ENCODE measurements at regions of chr15 and their contacts with region 1.

Region 1: GRCh38 chr15:98850961-98851573 is 156.5 kb downstream of the PGPEP1L start:
- DNase-seq: peak; percentile 88
- H3K4me3 Mint-ChIP-seq: peak overlapping the region; percentile 88
- H3K27ac Mint-ChIP-seq: peak overlapping the region; percentile 27
- H3K4me1 Mint-ChIP-seq: peaks cover 56% of the 10 kb centered on the region
- H3K27me3 Mint-ChIP-seq: no peaks in the 10 kb centered on the region

Region 2: GRCh38 chr15:98658831-98659699 is 192.0 kb before region 1 on chr15:
- CTCF ChIA-PET with region 1: interaction called, 13 read pairs
- intact Hi-C with region 1: no loop called
- DNase-seq: peak; percentile 45
- H3K4me3 Mint-ChIP-seq: no peak overlapping the region
- H3K27ac Mint-ChIP-seq: no peak overlapping the region
- H3K4me1 Mint-ChIP-seq: peaks cover 52% of the 10 kb centered on the region
- H3K27me3 Mint-ChIP-seq: no peaks in the 10 kb centered on the region

Region 3: DNA sequence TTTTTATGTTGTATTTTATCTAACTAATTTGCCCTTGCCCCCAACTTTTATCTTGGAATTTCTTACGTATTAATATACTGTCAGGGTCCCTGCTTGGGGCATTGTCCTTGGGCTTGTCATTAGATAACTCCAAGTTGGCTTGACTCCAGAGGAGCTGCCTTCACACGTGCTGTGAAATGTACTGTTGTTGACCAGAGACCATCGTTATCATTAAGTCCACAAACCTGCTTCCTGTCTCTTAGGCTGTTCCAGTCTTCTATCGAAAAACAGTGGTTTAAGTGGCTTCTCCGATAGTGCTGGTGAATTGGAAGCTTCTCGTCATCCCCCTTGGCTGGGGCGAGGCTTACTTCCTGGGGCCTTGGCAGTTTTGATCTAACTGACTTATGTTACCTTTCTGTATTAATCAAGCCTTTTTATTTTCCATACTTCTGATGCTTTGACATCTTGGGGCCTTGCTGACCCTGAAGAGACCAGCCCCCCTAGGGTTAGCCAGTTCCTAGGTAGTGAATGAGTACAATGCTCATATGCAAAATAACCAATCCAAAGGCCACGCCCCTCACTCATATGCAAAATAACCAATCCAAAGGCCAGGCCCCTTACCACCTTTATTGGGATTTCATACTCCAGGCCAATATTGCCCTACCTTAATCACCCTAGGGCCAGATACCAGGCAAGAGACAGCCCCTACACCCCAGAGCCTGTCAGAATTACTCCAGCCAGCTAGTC is 38.2 kb before region 1 on chr15:
- CTCF ChIA-PET with region 1: no interaction called
- intact Hi-C with region 1: no loop called
- DNase-seq: no peak
- H3K4me3 Mint-ChIP-seq: no peak overlapping the region
- H3K27ac Mint-ChIP-seq: no peak overlapping the region
- H3K4me1 Mint-ChIP-seq: peaks cover 11% of the 10 kb centered on the region
- H3K27me3 Mint-ChIP-seq: no peaks in the 10 kb centered on the region

Measured in activated naive CD4-positive, alpha-beta T cell treated with anti-CD3 and anti-CD28 coated beads for 36 hours (primary cell).